ENCODE measurements at regions of chr1 and their contacts with region 1.

Region 1: DNA sequence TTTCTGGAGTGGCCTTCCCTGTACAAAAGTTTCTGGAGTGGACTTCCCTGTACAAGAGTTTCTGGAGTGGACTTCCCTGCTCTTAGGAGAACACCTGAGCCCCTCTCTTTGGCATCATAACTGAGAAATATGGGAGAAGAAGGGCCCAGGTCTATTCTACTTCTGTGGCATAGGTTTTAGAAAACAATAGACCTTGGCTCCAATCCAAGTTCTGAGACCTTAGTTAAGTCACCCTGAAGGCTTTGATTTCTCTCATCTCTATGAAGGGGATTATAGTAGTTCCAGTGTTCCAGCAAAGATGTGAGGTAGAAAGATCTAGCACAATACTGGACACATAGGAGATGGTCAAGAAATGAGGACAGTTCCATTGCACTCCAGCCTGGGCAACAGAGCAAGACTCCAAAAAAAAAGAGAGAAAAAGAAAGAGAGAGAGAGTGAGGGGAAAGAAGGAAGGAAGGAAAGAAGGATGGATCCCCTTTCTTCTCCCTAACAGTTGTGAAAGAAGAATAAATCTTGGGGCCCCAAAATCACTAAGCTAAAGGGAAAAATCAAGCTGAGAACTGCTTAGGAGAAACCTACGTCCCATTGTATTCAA is 13.3 kb upstream of the EIF4G3 start:
- DNase-seq: no peak
- H3K4me3 ChIP-seq: no peak overlapping the region
- H3K27ac ChIP-seq: peak overlapping the region; percentile 23
- H3K4me1 ChIP-seq: peaks cover 23% of the 10 kb centered on the region
- H3K27me3 ChIP-seq: no peaks in the 10 kb centered on the region
- CTCF ChIP-seq: no peak

Region 2: GRCh38 chr1:20696397-20697329 is 493.3 kb before region 1 on chr1:
- intact Hi-C with region 1: loop called (anchors 10 kb)
- DNase-seq: peak; percentile 83
- H3K4me3 ChIP-seq: peak overlapping the region; percentile 71
- H3K27ac ChIP-seq: peak overlapping the region; percentile 86
- H3K4me1 ChIP-seq: peaks cover 14% of the 10 kb centered on the region
- H3K27me3 ChIP-seq: no peaks in the 10 kb centered on the region
- CTCF ChIP-seq: peak; percentile 90

Region 3: GRCh38 chr1:20850021-20850420 is 340.0 kb before region 1 on chr1:
- intact Hi-C with region 1: no loop called
- DNase-seq: no peak
- H3K4me3 ChIP-seq: no peak overlapping the region
- H3K27ac ChIP-seq: no peak overlapping the region
- H3K4me1 ChIP-seq: no peaks in the 10 kb centered on the region
- H3K27me3 ChIP-seq: no peaks in the 10 kb centered on the region
- CTCF ChIP-seq: no peak

Region 4: GRCh38 chr1:20981915-20982314 is 208.1 kb before region 1 on chr1:
- intact Hi-C with region 1: loop called (anchors 10 kb)
- DNase-seq: no peak
- H3K4me3 ChIP-seq: no peak overlapping the region
- H3K27ac ChIP-seq: no peak overlapping the region
- H3K4me1 ChIP-seq: peaks cover 14% of the 10 kb centered on the region
- H3K27me3 ChIP-seq: no peaks in the 10 kb centered on the region
- CTCF ChIP-seq: peak; percentile 53